Motor neuron (in vitro differentiated cells): ENCODE measurements at regions of chr13 and their contacts with region 1.

Region 1: GRCh38 chr13:40682449-40683240 is 16.2 kb upstream of the FOXO1 start:
- ATAC-seq: peak in 3 of 8 experiments; percentile 31 to 52 (median 37)
- H3K4me3 ChIP-seq: no peak overlapping the region
- H3K27ac ChIP-seq: no peak overlapping the region
- H3K4me1 ChIP-seq: peaks cover 0 to 2% of the 10 kb centered on the region in 2 donors

Region 2: DNA sequence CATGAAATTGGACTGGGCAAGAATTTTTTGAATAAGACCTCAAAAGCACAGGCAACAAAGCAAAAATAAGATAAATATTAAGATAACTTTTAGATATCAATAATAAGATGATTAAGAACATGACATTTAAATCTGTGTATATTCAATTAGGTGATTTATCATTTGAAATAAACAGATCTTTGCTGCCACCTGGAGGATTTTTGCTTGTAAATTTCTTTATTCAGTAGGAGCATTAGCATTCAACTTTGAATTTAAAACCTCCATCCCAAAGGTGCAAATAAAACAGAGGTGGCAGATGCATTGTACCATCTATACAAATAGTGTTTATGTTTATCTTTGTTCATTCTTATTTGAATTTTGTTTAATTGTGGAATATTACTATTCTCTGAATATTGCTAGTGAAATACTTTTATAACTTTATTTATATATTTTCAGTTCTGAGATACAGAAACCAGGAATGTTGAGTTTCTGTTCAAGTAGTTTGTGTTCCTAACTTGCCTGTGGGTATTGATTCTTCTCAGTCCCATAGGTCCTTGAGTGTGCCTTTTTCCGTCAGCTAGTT is 1006.2 kb before region 1 on chr13:
- in situ Hi-C with region 1: loop called in 4 of 9 experiments (anchors 25 kb)
- ATAC-seq: peak in 1 of 8 experiments; percentile 36
- H3K4me3 ChIP-seq: no peak overlapping the region
- H3K27ac ChIP-seq: no peak overlapping the region
- H3K4me1 ChIP-seq: no peaks in the 10 kb centered on the region

Region 3: GRCh38 chr13:39765801-39766463 is 916.7 kb before region 1 on chr13:
- in situ Hi-C with region 1: loop called in 2 of 9 experiments (anchors 25 kb)
- ATAC-seq: peak in 7 of 8 experiments; percentile 22 to 97 (median 64)
- H3K4me3 ChIP-seq: no peak overlapping the region
- H3K27ac ChIP-seq: no peak overlapping the region
- H3K4me1 ChIP-seq: no peaks in the 10 kb centered on the region

Region 4: GRCh38 chr13:39777527-39778061 is 905.1 kb before region 1 on chr13:
- in situ Hi-C with region 1: loop called in 3 of 9 experiments (anchors 25 kb)
- ATAC-seq: peak in 3 of 8 experiments; percentile 67 to 89 (median 89)
- H3K4me3 ChIP-seq: no peak overlapping the region
- H3K27ac ChIP-seq: no peak overlapping the region
- H3K4me1 ChIP-seq: no peaks in the 10 kb centered on the region

Region 5: DNA sequence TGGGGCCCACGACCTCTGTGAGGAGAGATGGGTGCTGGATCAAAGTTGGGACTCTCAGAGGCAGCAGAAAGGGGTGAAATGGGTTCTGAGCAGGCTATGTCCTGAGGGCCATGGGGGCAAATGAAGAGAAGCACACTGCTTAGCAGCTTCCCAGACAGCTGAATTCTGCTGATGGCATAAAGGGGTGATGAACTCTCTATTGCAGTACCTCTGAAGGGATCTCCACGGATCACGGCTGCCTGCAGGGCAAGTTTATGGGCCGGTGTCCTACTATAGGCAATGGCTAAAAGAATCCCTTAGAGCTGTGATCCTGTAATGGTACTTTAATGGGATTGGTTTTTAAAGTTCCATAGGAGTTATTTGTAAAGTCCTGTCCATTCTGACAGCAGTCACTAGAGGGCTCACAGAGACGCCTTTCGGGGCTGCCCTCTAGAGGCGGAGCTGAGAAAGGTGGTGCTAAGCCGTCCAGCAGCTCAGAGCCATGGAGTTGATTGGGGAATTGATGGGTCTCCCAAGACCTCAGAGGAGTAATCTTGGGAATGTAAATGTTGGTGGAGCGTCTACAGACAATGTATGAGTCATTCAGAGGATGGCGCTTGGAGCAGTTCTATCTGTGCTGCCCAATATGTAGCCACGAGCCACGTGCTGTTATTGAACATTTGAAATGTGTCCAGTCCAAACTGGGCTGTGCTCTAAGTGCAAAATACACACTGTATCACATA is 739.9 kb before region 1 on chr13:
- in situ Hi-C with region 1: loop called in 1 of 9 experiments (anchors 25 kb)
- ATAC-seq: peak in 7 of 8 experiments; percentile 21 to 100 (median 66)
- H3K4me3 ChIP-seq: no peak overlapping the region
- H3K27ac ChIP-seq: no peak overlapping the region
- H3K4me1 ChIP-seq: no peaks in the 10 kb centered on the region

Region 6: DNA sequence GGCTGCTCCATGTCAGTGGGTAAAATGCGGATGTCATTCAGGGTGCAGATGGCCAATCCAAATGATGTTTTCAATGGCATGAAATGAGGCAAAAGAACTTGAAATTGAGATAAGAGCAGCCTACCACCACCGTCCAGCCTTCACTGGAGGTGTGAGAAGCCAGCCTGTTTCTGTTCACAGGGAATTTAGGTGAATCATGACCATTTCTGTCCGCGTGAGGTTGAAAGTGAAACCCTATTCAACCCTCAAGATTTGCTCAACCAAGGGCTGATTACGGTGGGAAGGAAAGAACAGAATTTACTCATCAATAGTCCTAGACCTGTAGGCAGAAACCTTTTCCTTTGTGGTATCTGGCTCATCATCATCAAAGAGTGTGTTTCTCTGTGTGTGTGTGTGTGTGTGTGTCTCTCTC is 656.5 kb before region 1 on chr13:
- in situ Hi-C with region 1: loop called in 1 of 9 experiments (anchors 25 kb)
- ATAC-seq: no peak
- H3K4me3 ChIP-seq: no peak overlapping the region
- H3K27ac ChIP-seq: no peak overlapping the region
- H3K4me1 ChIP-seq: peaks cover 0 to 3% of the 10 kb centered on the region in 2 donors

Region 7: DNA sequence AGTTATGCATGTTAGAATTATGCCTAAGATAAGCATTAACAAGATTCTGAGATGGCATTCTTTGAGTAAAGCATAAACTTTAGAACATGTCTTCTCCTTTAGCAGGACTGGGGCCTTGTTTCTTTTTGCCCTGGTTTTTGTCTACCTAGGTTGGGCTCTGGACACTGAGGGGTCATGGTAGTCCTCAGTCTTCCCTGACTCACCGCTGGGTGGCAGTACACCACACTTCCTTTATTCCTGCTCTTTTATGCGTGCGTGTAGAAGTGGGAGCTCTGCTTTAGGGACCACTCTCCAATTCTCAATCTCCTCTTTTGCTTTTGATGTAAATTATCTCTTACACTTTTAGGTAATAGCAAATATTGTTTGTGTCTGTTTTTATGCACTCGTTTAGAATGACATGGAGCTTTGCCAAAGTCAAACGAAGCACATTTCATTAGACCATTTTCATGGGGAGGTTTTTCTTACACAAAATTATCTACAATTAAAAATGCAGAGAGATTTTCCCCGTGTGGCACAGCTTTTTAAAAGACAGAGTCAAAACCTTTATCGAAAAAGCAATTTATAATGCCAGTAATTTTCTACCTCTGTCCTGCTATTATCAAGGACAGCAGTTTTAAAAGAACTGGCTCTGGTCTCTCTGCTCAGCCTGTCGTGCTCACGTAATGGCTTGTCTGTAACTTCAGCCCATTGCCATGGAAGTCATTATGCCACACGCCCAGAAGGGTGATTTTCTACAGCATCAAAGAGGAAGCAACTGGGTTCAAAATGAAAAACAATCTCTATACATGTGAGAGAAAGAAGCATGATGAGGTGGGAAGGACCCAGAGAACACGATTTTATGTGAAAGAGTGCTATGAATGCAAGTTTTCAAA is 613.2 kb before region 1 on chr13:
- in situ Hi-C with region 1: loop called in 8 of 9 experiments (anchors 10 to 25 kb)
- ATAC-seq: peak; percentile 65 to 98 (median 88)
- H3K4me3 ChIP-seq: no peak overlapping the region
- H3K27ac ChIP-seq: no peak overlapping the region
- H3K4me1 ChIP-seq: peaks cover 0 to 4% of the 10 kb centered on the region in 2 donors